Endothelial cell of umbilical vein (primary cell): ENCODE measurements at regions of chr4 and their contacts with region 1.

Region 1: DNA sequence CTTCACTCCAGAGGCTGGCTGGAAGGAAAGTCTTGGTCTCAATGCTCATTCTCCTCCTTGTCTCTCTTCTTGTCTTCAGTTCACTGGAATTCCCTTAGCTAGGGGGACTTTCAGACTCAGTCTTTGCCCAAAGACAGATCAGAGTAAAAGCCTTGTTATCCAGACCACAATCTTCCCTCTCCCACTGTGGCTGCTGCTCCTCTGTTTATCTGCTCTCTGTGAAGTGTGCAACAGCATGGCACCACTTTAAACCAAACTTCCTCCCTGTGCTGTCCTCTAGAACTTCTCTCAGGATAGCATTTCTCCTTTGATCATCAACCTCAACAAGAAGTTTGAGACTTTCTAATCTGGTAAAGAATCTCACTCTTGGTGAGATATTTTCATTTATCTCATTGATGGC is 530.1 kb upstream of the SLIT2 start:
- DNase-seq: peak; percentile 32
- H3K4me3 ChIP-seq: no peak overlapping the region
- H3K27ac ChIP-seq: no peak overlapping the region
- H3K4me1 ChIP-seq: peaks cover 39% of the 10 kb centered on the region
- H3K27me3 ChIP-seq: no peaks in the 10 kb centered on the region
- CTCF ChIP-seq: no peak
- POLR2A ChIP-seq: no peak

Region 2: DNA sequence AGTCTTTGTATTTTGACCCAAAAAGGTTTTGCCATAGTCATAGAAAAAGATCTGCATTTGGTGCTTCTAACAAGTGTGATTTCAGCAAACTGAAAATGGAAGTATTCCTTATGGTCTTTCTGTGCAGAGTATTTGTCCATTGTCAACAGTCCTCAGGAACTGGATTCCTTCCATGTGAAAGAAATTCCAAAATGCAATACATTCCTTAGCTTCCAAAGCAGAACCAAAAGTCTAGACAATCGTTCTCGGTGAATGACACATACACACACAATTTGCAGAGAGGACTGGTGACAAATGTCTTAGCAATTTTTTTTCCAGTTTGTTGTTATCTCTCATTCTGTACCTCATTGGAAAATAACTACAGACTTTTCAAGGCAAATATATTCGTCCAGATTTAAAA is 32.1 kb before region 1 on chr4:
- CTCF ChIA-PET with region 1: no interaction called
- POLR2A ChIA-PET with region 1: no interaction called
- dilution Hi-C with region 1: no loop called
- intact Hi-C with region 1: loop called (anchors 2 kb)
- DNase-seq: peak; percentile 33
- H3K4me3 ChIP-seq: no peak overlapping the region
- H3K27ac ChIP-seq: no peak overlapping the region
- H3K4me1 ChIP-seq: no peaks in the 10 kb centered on the region
- H3K27me3 ChIP-seq: no peaks in the 10 kb centered on the region
- CTCF ChIP-seq: no peak
- POLR2A ChIP-seq: no peak

Region 3: GRCh38 chr4:19739101-19739720 is 17.6 kb after region 1 on chr4:
- CTCF ChIA-PET with region 1: no interaction called
- POLR2A ChIA-PET with region 1: no interaction called
- dilution Hi-C with region 1: no loop called
- intact Hi-C with region 1: loop called (anchors 1 kb)
- DNase-seq: peak; percentile 96
- H3K4me3 ChIP-seq: peak overlapping the region in 2 of 3 experiments; percentile 9 to 41
- H3K27ac ChIP-seq: peak overlapping the region; percentile 84
- H3K4me1 ChIP-seq: peaks cover 22% of the 10 kb centered on the region
- H3K27me3 ChIP-seq: no peaks in the 10 kb centered on the region
- CTCF ChIP-seq: no peak
- POLR2A ChIP-seq: no peak

Region 4: DNA sequence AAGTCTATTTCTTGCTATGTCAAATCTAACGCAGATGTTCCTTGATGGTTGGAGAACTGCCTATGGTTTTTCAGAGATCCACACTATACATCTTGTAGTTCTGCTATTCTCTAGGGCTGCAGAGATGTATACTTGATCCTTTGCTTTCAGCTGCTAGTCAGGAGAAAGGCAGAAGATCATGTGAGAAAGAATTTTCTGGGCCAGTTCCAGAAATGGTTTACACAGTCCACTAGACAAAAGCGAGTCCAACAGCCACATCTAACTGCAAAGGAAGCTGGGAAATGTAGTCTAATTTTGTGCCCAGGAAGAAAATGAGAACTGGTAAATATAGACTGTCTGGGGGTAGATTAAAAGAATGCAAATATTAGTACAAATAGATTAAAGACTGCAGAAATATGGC is 135.8 kb after region 1 on chr4:
- CTCF ChIA-PET with region 1: no interaction called
- POLR2A ChIA-PET with region 1: no interaction called
- dilution Hi-C with region 1: no loop called
- intact Hi-C with region 1: no loop called
- DNase-seq: peak; percentile 21
- H3K4me3 ChIP-seq: no peak overlapping the region
- H3K27ac ChIP-seq: no peak overlapping the region
- H3K4me1 ChIP-seq: no peaks in the 10 kb centered on the region
- H3K27me3 ChIP-seq: no peaks in the 10 kb centered on the region
- CTCF ChIP-seq: no peak
- POLR2A ChIP-seq: no peak